ENCODE measurements at regions of chr1 and their contacts with region 1.

Region 1: GRCh38 chr1:15820478-15820877 is 13.0 kb upstream of the UQCRHL start:
- DNase-seq: no peak
- ATAC-seq: no peak
- H3K4me3 ChIP-seq: no peak overlapping the region
- H3K4me3 Mint-ChIP-seq: no peak overlapping the region
- H3K27ac ChIP-seq: no peak overlapping the region
- H3K27ac Mint-ChIP-seq: no peak overlapping the region
- H3K4me1 ChIP-seq: no peaks in the 10 kb centered on the region
- H3K4me1 Mint-ChIP-seq: peaks cover 3% of the 10 kb centered on the region
- H3K27me3 ChIP-seq: no peaks in the 10 kb centered on the region
- H3K27me3 Mint-ChIP-seq: no peaks in the 10 kb centered on the region
- CTCF ChIP-seq: no peak

Region 2: DNA sequence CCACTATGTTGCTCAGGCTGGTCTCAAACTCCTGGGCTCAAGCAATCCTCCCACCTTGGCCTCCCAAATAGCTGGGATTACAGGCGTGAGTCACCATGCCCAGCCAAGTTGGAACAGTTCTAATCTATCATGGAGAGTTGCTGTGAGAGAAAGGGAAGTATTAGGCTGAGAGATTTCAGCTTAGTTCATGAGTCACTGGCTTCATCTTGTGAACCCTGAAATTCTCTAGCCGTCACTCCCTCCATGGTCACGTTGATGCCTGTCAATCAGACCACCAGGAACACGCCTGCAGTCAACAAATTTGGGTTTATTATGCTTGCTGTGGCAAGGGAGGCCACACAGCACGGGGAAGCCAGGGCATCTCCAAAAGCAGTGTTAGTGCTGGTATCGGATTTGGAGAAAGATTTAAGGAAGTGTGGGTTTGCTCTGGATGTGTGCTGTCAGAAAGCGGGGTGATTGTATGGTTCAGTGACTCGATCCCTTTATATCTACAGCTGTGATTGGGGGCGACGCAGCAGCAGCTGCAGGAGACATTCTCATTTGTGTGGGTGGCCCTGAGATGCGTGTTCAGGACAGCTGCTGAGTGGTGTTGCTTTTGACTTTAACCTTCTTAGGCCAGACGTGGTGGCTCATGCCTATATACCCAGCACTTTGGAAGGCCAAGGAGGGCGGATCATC is 31.7 kb before region 1 on chr1:
- CTCF ChIA-PET with region 1: interaction called, 10 read pairs
- POLR2A ChIA-PET with region 1: no interaction called
- intact Hi-C with region 1: no loop called
- DNase-seq: peak in 1 of 9 experiments; percentile 18
- ATAC-seq: no peak
- H3K4me3 ChIP-seq: no peak overlapping the region
- H3K4me3 Mint-ChIP-seq: no peak overlapping the region
- H3K27ac ChIP-seq: no peak overlapping the region
- H3K27ac Mint-ChIP-seq: no peak overlapping the region
- H3K4me1 ChIP-seq: no peaks in the 10 kb centered on the region
- H3K4me1 Mint-ChIP-seq: peaks cover 3% of the 10 kb centered on the region
- H3K27me3 ChIP-seq: no peaks in the 10 kb centered on the region
- H3K27me3 Mint-ChIP-seq: peaks cover 11% of the 10 kb centered on the region
- CTCF ChIP-seq: no peak

Region 3: DNA sequence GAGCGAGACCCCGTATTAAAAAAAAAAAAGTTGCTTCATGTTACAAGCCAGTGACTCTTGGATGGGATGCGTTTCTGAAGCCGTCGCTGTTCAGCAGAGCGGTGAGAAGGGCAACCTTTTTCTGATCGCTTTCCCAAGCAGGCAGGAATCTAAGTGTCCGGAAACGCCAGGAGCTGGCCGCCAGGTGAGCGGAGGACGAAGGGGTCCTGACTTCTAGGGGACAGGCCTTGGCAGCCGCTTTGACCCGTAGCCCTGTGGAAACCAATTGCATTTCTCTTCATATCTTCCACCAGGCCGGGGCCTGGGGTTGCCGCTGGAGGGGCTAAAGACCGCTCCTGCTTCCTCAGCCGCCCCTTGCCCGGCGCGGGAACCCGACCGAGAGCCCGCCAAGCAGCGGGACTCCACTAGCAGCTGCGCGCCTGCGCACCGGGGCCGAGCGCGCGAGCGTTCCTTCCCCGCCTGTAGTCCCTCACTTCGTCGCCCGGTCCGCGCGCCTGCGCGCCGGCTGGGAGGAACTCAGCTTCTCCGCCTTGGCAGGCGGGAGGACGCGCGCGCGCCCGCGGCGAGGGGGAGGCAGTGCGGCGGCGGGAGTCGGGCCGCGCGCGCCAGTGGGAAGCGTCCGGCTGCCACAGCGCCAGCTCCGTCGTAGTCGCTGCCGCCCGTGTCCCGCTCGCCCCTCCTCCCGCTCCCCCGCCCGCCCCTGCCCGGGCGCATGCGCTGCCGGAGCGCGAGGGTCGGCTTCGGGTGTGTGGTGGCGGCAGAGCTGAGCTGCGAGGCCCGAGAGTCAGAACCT is 26.8 kb after region 1 on chr1 and contains the start of gene SPEN:
- CTCF ChIA-PET with region 1: interaction called, 9 read pairs
- POLR2A ChIA-PET with region 1: interaction called, 15 read pairs
- intact Hi-C with region 1: loop called (anchors 1 to 2 kb)
- DNase-seq: peak; percentile 95 to 99 (median 99)
- ATAC-seq: peak; percentile 80
- H3K4me3 ChIP-seq: peak within 1 kb of the TSS; percentile 96 to 99
- H3K4me3 Mint-ChIP-seq: peak within 1 kb of the TSS; percentile 98
- H3K27ac ChIP-seq: peak within 1 kb of the TSS; percentile 91 to 93
- H3K27ac Mint-ChIP-seq: peak within 1 kb of the TSS; percentile 97
- H3K4me1 ChIP-seq: peaks cover 24% of the 10 kb centered on the region
- H3K4me1 Mint-ChIP-seq: peaks cover 36% of the 10 kb centered on the region
- H3K27me3 ChIP-seq: no peaks in the 10 kb centered on the region
- H3K27me3 Mint-ChIP-seq: no peaks in the 10 kb centered on the region
- CTCF ChIP-seq: no peak
- total RNA-seq, gene SPEN: 85.9 to 87.3 TPM

Region 4: GRCh38 chr1:15918962-15919715 is 98.7 kb after region 1 on chr1:
- CTCF ChIA-PET with region 1: interaction called, 12 read pairs
- POLR2A ChIA-PET with region 1: no interaction called
- intact Hi-C with region 1: loop called (anchors 1 to 5 kb)
- DNase-seq: peak in 7 of 9 experiments; percentile 16 to 76 (median 48)
- ATAC-seq: peak; percentile 82
- H3K4me3 ChIP-seq: no peak overlapping the region
- H3K4me3 Mint-ChIP-seq: no peak overlapping the region
- H3K27ac ChIP-seq: peak overlapping the region in 1 of 2 experiments; percentile 12
- H3K27ac Mint-ChIP-seq: peak overlapping the region; percentile 34
- H3K4me1 ChIP-seq: peaks cover 23% of the 10 kb centered on the region
- H3K4me1 Mint-ChIP-seq: peaks cover 32% of the 10 kb centered on the region
- H3K27me3 ChIP-seq: no peaks in the 10 kb centered on the region
- H3K27me3 Mint-ChIP-seq: no peaks in the 10 kb centered on the region
- CTCF ChIP-seq: no peak

Region 5: DNA sequence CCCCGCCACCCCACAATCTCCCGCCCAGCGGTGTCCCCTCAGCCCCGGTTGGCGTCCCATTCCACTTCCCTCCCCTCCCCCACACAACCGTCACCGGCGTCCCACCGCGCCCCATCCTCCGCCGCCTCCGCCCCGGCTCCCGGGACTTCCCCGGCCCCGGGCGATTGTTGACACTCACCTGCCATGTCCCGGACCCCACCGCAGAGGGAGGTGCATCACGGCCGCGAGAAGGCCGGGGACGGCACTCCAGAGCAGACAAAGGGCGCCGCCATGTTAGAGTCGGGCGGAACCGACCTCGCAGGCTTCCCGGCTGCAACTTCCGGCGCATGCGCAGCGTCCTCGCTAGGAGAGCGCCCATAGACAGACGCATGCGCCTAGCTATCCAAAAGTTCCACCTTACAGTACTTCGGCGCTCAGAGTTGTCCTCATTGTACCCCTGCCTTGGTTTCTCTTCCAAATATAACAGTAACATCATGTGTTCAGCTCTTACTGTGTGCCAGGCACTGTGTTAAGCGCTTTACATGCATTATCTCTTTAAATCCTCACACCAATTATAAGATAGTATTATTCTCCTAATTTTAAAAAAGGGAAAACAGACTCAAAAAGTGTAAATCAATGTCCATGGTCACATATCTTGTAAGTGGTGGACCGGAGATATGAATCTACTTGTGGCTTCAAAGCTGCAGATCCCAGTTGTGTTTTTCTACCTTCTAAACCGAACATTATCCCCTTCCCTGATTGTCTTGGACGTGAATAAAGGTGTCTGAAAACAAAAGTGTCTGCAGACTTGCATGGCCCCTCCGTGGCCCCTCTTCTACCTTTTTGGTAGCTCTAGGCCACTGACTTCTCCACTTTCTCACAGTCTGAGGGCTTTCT is 155.6 kb after region 1 on chr1 and contains the start of gene ZBTB17:
- CTCF ChIA-PET with region 1: interaction called, 4 read pairs
- POLR2A ChIA-PET with region 1: interaction called, 4 read pairs
- intact Hi-C with region 1: loop called in 1 of 2 experiments (anchors 5 kb)
- DNase-seq: peak; percentile 90 to 98 (median 95)
- ATAC-seq: peak; percentile 88
- H3K4me3 ChIP-seq: peak within 1 kb of the TSS; percentile 89 to 93
- H3K4me3 Mint-ChIP-seq: peak within 1 kb of the TSS; percentile 90
- H3K27ac ChIP-seq: peak within 1 kb of the TSS; percentile 68 to 87
- H3K27ac Mint-ChIP-seq: peak within 1 kb of the TSS; percentile 94
- H3K4me1 ChIP-seq: peaks cover 11% of the 10 kb centered on the region
- H3K4me1 Mint-ChIP-seq: peaks cover 38% of the 10 kb centered on the region
- H3K27me3 ChIP-seq: no peaks in the 10 kb centered on the region
- H3K27me3 Mint-ChIP-seq: no peaks in the 10 kb centered on the region
- CTCF ChIP-seq: no peak
- total RNA-seq, gene ZBTB17: 106 to 115 TPM

Region 6: GRCh38 chr1:15994590-15995351 is 174.3 kb after region 1 on chr1:
- CTCF ChIA-PET with region 1: interaction called, 12 read pairs
- POLR2A ChIA-PET with region 1: no interaction called
- intact Hi-C with region 1: no loop called
- DNase-seq: peak in 6 of 9 experiments; percentile 19 to 63 (median 52)
- ATAC-seq: peak; percentile 77
- H3K4me3 ChIP-seq: no peak overlapping the region
- H3K4me3 Mint-ChIP-seq: no peak overlapping the region
- H3K27ac ChIP-seq: no peak overlapping the region
- H3K27ac Mint-ChIP-seq: no peak overlapping the region
- H3K4me1 ChIP-seq: no peaks in the 10 kb centered on the region
- H3K4me1 Mint-ChIP-seq: no peaks in the 10 kb centered on the region
- H3K27me3 ChIP-seq: no peaks in the 10 kb centered on the region
- H3K27me3 Mint-ChIP-seq: no peaks in the 10 kb centered on the region
- CTCF ChIP-seq: peak; percentile 37

Region 7: DNA sequence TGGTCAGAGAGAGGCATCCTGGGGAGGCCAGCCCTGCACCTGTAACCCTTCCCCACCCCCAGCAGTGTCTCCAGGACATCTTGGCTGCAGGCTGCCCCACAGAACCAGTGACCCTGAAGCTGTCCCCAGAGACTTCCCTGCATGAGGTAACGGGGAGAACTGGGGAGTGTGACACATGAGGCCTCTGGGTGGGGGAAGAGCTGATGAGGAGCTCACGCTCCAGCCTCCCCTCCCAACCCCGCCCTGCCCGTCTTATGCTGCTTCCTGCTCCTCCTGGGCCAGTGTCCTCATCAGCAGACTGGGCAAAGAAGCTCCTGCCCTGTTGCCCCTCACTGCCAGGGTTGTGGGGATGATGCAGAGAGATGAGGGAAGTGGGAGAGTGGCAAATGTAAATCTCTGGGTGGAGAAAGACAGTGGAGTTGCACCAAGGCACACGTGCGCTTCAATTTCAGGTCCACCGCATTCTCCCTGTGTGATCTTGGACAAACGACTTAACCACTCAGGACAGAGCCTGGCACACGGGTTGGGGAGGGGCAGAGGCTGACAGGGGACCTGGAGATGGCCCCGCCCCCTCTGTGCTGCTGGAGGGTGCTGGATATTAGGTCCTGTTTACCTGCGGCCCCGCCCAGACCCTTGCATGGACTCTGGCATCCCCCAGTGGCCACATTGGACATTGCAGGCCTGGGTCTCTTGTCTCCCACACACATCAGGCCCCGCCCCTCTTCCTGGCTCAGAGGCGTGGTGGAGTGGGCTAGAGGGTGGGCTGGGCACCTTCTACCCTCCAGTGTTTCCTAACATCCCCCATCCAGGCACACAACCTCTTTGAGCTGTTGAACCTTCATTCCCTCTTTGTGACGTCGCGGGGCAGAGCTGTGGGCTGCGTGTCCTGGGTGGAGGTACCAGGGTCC is 235.4 kb after region 1 on chr1:
- CTCF ChIA-PET with region 1: interaction called, 9 read pairs
- POLR2A ChIA-PET with region 1: no interaction called
- intact Hi-C with region 1: loop called in 1 of 2 experiments (anchors 1 kb)
- DNase-seq: peak; percentile 34 to 90 (median 87)
- ATAC-seq: peak; percentile 100
- H3K4me3 ChIP-seq: no peak overlapping the region
- H3K4me3 Mint-ChIP-seq: no peak overlapping the region
- H3K27ac ChIP-seq: no peak overlapping the region
- H3K27ac Mint-ChIP-seq: no peak overlapping the region
- H3K4me1 ChIP-seq: peaks cover 4% of the 10 kb centered on the region
- H3K4me1 Mint-ChIP-seq: peaks cover 6% of the 10 kb centered on the region
- H3K27me3 ChIP-seq: no peaks in the 10 kb centered on the region
- H3K27me3 Mint-ChIP-seq: no peaks in the 10 kb centered on the region
- CTCF ChIP-seq: peak; percentile 89

Region 8: DNA sequence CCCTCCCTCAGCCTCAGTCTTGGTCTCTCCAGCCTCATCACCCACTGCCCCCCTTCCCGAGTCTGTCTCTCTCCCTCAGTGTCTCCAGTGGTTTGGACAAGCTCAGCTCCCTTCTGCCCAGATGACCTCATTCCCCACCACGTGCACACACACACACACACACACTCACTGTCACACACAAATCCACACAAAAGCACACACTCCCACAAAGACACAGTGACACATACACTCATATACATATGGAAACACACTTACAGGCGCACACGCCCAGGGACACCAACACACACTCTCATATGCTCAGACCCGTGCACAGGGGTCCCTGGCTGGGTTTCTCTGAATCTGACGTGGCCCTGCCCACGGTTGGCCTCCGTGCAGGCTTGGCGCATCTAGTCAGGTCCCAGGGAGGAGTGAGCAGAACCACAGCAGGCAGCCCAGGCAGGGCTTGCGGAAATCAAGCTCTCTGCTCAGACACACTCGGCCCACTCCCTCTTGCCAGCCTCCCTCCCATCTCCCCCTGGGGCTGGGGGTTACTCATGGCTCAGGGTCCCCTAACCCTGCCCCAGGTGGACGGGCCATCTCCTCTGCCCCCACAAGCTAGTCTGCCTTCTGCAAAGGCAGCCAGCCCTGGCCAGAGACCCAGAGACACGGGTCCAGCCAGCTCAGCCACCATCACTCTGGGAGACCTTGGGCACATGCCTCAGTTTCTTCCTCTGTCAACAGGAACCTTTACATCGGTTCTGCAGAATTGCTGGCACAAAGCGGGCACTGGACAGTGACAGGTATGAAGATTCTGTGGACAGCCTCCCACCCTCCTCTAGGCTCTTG is 291.5 kb after region 1 on chr1:
- CTCF ChIA-PET with region 1: no interaction called
- POLR2A ChIA-PET with region 1: no interaction called
- intact Hi-C with region 1: no loop called
- DNase-seq: no peak
- ATAC-seq: no peak
- H3K4me3 ChIP-seq: no peak overlapping the region
- H3K4me3 Mint-ChIP-seq: no peak overlapping the region
- H3K27ac ChIP-seq: no peak overlapping the region
- H3K27ac Mint-ChIP-seq: no peak overlapping the region
- H3K4me1 ChIP-seq: no peaks in the 10 kb centered on the region
- H3K4me1 Mint-ChIP-seq: no peaks in the 10 kb centered on the region
- H3K27me3 ChIP-seq: peaks cover 0 to 2% of the 10 kb centered on the region in 2 experiments
- H3K27me3 Mint-ChIP-seq: peaks cover 5% of the 10 kb centered on the region
- CTCF ChIP-seq: no peak